Common myeloid progenitor, CD34-positive (primary cell): ENCODE measurements at regions of chr17 and their contacts with region 1.

Region 1: GRCh38 chr17:30336369-30337171 is 2.7 kb upstream of the TMIGD1 start:
- DNase-seq: peak; percentile 64 to 72 (median 68)
- H3K4me3 ChIP-seq: no peak overlapping the region
- H3K27ac ChIP-seq: no peak overlapping the region
- H3K4me1 ChIP-seq: peaks cover 2 to 19% (median 9%) of the 10 kb centered on the region in 4 experiments
- H3K27me3 ChIP-seq: no peaks in the 10 kb centered on the region

Region 2: GRCh38 chr17:30124273-30124796 is 212.2 kb before region 1 on chr17:
- CTCF ChIA-PET with region 1: interaction called, 15 read pairs
- POLR2A ChIA-PET with region 1: no interaction called
- DNase-seq: no peak
- H3K4me3 ChIP-seq: no peak overlapping the region
- H3K27ac ChIP-seq: peak overlapping the region in 1 of 2 experiments; percentile 43
- H3K4me1 ChIP-seq: no peaks in the 10 kb centered on the region
- H3K27me3 ChIP-seq: no peaks in the 10 kb centered on the region

Region 3: GRCh38 chr17:30323895-30324319 is 12.7 kb before region 1 on chr17:
- CTCF ChIA-PET with region 1: interaction called, 19 read pairs
- POLR2A ChIA-PET with region 1: no interaction called
- DNase-seq: peak; percentile 51 to 86 (median 85)
- H3K4me3 ChIP-seq: no peak overlapping the region
- H3K27ac ChIP-seq: no peak overlapping the region
- H3K4me1 ChIP-seq: peaks cover 0 to 19% (median 13%) of the 10 kb centered on the region in 4 experiments
- H3K27me3 ChIP-seq: no peaks in the 10 kb centered on the region